HepG2 (cell line): ENCODE measurements at regions of chr1 and their contacts with region 1.

Region 1: DNA sequence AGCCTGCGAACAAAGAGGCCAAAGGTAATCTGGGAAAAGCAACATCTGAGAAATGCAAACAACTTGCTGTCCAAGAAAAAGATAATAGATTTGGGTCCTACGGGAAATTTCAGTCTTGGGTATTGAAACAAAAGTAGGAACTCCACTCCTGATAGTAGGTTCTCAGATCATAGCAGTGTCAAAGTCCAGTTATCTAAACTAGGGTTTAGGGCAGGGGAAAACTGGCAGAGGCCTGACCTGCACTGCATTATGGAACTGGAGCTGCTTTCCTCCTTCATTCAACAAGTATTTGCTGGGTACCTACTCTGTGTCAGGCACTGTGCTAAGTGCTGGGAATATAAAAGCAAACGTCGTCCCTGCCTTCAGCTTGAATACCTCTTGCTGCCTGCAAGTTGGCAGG is 60.7 kb upstream of the NGF start:
- DNase-seq: no peak
- ATAC-seq: no peak
- H3K4me3 ChIP-seq: no peak overlapping the region
- H3K27ac ChIP-seq: no peak overlapping the region
- H3K4me1 ChIP-seq: no peaks in the 10 kb centered on the region
- H3K27me3 ChIP-seq: no peaks in the 10 kb centered on the region
- CTCF ChIP-seq: no peak
- EP300 ChIP-seq: no peak
- POLR2A ChIP-seq: no peak
- RAD21 ChIP-seq: no peak

Region 2: GRCh38 chr1:115373305-115373704 is 25.4 kb before region 1 on chr1:
- CTCF ChIA-PET with region 1: no interaction called
- POLR2A ChIA-PET with region 1: no interaction called
- in situ Hi-C with region 1: no loop called
- intact Hi-C with region 1: loop called (anchors 1 kb)
- DNase-seq: no peak
- ATAC-seq: no peak
- H3K4me3 ChIP-seq: no peak overlapping the region
- H3K27ac ChIP-seq: no peak overlapping the region
- H3K4me1 ChIP-seq: no peaks in the 10 kb centered on the region
- H3K27me3 ChIP-seq: no peaks in the 10 kb centered on the region
- CTCF ChIP-seq: no peak
- EP300 ChIP-seq: no peak
- POLR2A ChIP-seq: no peak
- RAD21 ChIP-seq: no peak

Region 3: GRCh38 chr1:115437146-115437639 is 38.4 kb after region 1 on chr1:
- CTCF ChIA-PET with region 1: no interaction called
- POLR2A ChIA-PET with region 1: no interaction called
- in situ Hi-C with region 1: no loop called
- intact Hi-C with region 1: no loop called
- DNase-seq: no peak
- ATAC-seq: no peak
- H3K4me3 ChIP-seq: no peak overlapping the region
- H3K27ac ChIP-seq: no peak overlapping the region
- H3K4me1 ChIP-seq: no peaks in the 10 kb centered on the region
- H3K27me3 ChIP-seq: peaks cover 0 to 1% of the 10 kb centered on the region in 2 experiments; a peak in 1 of 5 replicates
- CTCF ChIP-seq: no peak
- EP300 ChIP-seq: no peak
- POLR2A ChIP-seq: no peak
- RAD21 ChIP-seq: no peak